Gastrocnemius medialis (tissue), 4 donors: ENCODE measurements at regions of chr18 and their contacts with region 1.

Region 1: DNA sequence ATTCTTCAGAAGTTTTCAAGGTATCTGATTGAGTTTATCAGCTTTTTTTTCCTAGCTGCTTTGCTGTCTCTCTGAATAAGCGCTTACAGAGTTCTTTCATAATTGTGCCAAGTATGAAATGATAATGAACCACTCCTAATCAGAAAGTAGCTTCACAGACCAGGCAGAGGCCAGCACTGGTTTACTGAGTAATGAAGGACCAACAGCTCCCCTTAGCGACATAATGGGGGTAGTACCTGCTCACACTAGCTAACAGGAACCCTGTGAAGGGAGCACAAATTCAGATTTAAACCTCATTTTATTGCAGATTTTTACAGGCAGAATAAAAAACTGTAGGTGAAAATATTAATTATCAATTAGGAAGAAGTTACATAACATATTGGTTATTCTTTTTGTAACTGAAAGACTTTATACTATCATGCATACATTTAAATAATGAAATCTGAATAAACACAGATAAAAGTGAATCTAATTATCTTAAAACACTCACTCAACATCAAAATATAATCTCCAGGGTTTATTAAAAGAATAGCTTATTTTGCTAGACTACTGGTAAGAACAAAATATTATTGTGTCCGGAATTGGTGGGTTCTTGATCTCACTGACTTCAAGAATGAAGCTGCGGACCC is 53.7 kb upstream of the LRRC30 start:
- DNase-seq: no peak
- ATAC-seq: peak in 1 of 2 donors; percentile 64
- H3K4me3 ChIP-seq: no peak overlapping the region
- H3K27ac ChIP-seq: no peak overlapping the region
- H3K4me1 ChIP-seq: no peaks in the 10 kb centered on the region
- H3K27me3 ChIP-seq: no peaks in the 10 kb centered on the region
- CTCF ChIP-seq: peak in 3 of 5 experiments; percentile 35 to 51 (median 45)
- POLR2A ChIP-seq: no peak

Region 2: GRCh38 chr18:6920099-6920899 is 256.9 kb before region 1 on chr18:
- in situ Hi-C with region 1: no loop called
- intact Hi-C with region 1: loop called (anchors 10 kb)
- DNase-seq: no peak
- ATAC-seq: no peak
- H3K4me3 ChIP-seq: no peak overlapping the region
- H3K27ac ChIP-seq: no peak overlapping the region
- H3K4me1 ChIP-seq: no peaks in the 10 kb centered on the region
- H3K27me3 ChIP-seq: no peaks in the 10 kb centered on the region
- CTCF ChIP-seq: peak in 3 of 5 experiments; percentile 24 to 40 (median 33)
- POLR2A ChIP-seq: no peak

Region 3: GRCh38 chr18:7038330-7038851 is 138.8 kb before region 1 on chr18:
- in situ Hi-C with region 1: no loop called
- intact Hi-C with region 1: loop called (anchors 5 kb)
- DNase-seq: peak; percentile 48 to 78
- ATAC-seq: peak; percentile 92 to 95
- H3K4me3 ChIP-seq: peak overlapping the region in 2 of 4 donors; percentile 10 to 29
- H3K27ac ChIP-seq: peak overlapping the region in 3 of 4 donors; percentile 37 to 57 (median 51)
- H3K4me1 ChIP-seq: no peaks in the 10 kb centered on the region
- H3K27me3 ChIP-seq: no peaks in the 10 kb centered on the region
- CTCF ChIP-seq: peak; percentile 10 to 61 (median 43)
- POLR2A ChIP-seq: no peak